GM10248 (cell line): ENCODE measurements at regions of chr2 and their contacts with region 1.

Region 1: GRCh38 chr2:96801005-96801785 is 14.9 kb upstream of the CNNM3 start:
- DNase-seq: peak; percentile 89
- CTCF ChIP-seq: peak; percentile 97

Region 2: DNA sequence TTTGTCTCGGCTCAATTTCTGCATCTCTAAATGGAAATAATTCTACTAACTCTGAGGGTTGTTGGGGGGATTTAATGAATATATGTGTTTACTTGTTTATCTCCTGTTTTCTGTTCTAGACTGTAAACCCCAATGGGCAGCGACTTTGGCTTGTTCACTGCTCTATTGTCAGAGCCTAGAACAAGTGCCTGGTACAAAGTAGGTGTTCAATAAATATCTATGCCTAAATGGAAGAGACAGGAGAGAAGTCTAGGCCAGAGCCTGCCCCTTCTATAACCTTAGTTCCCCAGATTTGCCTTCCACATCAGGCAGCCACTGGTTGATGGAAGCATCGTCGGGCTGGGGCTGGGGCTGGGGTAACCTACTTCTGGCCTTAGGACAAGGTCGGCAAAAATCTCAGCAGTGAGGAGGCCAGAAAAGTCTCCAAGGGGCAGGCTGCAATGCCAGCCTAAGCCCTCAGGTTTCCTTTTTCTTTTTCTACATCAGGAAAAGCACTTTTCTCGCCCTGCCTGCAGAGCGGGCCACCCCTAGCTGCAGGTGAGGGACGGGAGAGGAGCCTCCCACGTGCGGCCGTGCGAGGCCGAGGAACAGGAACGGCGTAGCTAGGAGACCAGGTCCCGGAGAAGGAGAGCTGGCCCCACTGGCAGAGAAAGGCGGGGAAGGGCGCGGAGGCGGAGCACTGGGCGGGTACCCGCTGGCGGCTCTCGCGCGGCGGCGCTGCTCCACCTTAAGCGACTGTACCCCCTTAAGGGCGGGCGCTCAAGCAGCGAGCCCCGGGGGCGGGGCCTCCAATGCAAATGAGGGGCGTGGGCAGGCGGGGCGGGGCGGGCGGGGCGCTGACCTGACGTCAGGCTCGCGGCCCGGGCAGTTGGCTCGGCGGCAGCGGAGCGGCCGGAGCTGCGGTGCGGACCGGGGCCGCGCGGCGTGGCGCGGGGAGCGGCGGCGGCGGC is 40.9 kb before region 1 on chr2 and contains the start of gene CNNM4:
- CTCF ChIA-PET with region 1: interaction called, 53 read pairs
- POLR2A ChIA-PET with region 1: interaction called, 3 read pairs
- DNase-seq: peak; percentile 95
- CTCF ChIP-seq: peak; percentile 9

Region 3: DNA sequence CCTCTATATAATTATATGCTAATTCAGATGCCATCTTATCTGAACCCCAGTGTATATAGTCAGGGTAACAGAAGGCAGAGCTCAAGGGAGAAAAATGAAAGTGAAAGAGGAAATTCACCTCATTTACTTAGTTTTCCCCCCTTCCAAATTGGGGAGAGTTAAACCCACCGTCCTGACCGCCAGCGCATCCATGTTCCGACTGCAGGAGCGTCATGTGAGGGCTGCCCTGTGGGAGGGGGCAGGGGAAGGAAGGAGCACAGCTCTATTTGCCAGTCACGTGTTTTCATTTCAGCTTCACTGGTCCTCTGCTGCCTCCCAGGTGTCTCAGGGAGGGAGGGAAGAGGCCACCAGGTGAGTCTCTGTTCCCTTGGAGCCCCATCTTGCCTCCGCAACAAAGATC is 27.3 kb before region 1 on chr2:
- CTCF ChIA-PET with region 1: interaction called, 13 read pairs
- POLR2A ChIA-PET with region 1: no interaction called
- DNase-seq: no peak
- CTCF ChIP-seq: no peak

Region 4: GRCh38 chr2:96788442-96789244 is 12.6 kb before region 1 on chr2:
- CTCF ChIA-PET with region 1: interaction called, 12 read pairs
- POLR2A ChIA-PET with region 1: no interaction called
- DNase-seq: no peak
- CTCF ChIP-seq: no peak

Region 5: GRCh38 chr2:96816128-96816835 is 15.1 kb after region 1 on chr2 and contains the start of gene CNNM3:
- CTCF ChIA-PET with region 1: interaction called, 14 read pairs
- POLR2A ChIA-PET with region 1: no interaction called
- DNase-seq: peak; percentile 99
- CTCF ChIP-seq: peak; percentile 37

Region 6: GRCh38 chr2:96826546-96827278 is 25.5 kb after region 1 on chr2:
- CTCF ChIA-PET with region 1: no interaction called
- POLR2A ChIA-PET with region 1: no interaction called
- DNase-seq: no peak
- CTCF ChIP-seq: no peak